ENCODE measurements at regions of chr1 and their contacts with region 1.

Region 1: DNA sequence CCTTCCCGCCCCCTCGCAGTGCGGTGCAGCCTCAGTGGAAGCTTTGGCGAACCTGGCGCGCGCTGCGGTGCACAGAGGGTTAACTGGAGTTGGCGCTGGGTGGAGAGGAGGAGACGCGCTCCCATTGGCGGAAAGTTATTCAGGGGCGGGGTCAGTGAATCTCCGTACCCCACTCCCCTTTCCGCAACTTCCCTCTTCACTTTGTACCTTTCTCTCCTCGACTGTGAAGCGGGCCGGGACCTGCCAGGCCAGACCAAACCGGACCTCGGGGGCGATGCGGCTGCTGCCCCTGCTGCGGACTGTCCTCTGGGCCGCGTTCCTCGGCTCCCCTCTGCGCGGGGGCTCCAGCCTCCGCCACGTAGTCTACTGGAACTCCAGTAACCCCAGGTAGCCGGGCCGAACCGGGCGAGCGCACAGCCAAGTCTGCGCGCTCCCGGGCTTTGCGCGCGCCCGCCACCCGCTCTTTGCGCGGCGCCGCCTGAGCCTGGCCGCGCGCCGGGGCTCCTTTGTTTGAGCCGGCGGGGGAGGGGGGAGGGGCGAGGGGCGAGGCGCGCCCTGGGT is at the start of gene EFNA4:
- DNase-seq: peak; percentile 92
- ATAC-seq: peak; percentile 87
- H3K4me3 Mint-ChIP-seq: peak within 1 kb of the TSS; percentile 83
- H3K27ac Mint-ChIP-seq: peak within 1 kb of the TSS; percentile 72
- H3K4me1 Mint-ChIP-seq: peaks cover 31% of the 10 kb centered on the region
- H3K27me3 Mint-ChIP-seq: no peaks in the 10 kb centered on the region
- total RNA-seq, gene EFNA4: 6.3 to 6.5 TPM

Region 2: DNA sequence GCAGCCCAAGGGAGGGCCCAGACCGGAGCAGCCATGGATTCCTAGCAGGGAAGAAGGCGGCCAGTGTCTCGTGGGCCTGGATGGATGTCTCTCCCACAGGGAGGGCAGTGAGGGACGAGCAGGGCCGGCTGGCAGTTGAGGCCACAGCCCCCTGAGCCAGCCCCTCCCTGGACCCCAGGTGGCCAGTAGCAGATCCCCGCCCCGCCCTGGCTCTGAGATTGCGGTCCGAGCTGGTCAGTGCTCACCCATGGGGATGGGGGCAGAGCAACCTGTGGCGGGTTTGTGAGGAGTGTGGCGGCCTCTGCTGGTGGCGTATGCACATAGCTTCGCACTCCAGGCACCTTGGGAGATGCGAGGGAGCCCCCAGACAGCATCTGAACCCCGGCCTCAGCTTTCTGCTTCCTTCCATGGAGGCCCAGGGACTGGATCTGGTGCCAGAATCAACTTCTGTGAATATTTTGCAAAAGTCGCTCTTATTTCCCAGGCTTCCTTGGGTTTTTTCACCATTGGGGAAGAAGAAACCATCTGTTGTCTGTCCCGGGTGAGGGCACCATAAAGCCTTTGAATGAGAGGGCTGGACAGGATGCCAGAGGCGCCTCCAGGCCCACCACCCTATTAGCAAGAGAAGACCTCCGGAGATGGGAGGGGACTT is 185.1 kb before region 1 on chr1:
- CTCF ChIA-PET with region 1: interaction called, 3 read pairs
- POLR2A ChIA-PET with region 1: no interaction called
- intact Hi-C with region 1: loop called in 1 of 2 experiments (anchors 1 kb)
- DNase-seq: peak; percentile 87
- ATAC-seq: peak; percentile 95
- H3K4me3 Mint-ChIP-seq: no peak overlapping the region
- H3K27ac Mint-ChIP-seq: no peak overlapping the region
- H3K4me1 Mint-ChIP-seq: peaks cover 10% of the 10 kb centered on the region
- H3K27me3 Mint-ChIP-seq: peaks cover 4% of the 10 kb centered on the region

Region 3: GRCh38 chr1:154961497-154962262 is 102.0 kb before region 1 on chr1 and contains the start of gene PYGO2:
- CTCF ChIA-PET with region 1: interaction called, 3 read pairs
- POLR2A ChIA-PET with region 1: no interaction called
- intact Hi-C with region 1: loop called (anchors 1 to 5 kb)
- DNase-seq: peak; percentile 90
- ATAC-seq: peak; percentile 81
- H3K4me3 Mint-ChIP-seq: peak within 1 kb of the TSS; percentile 91
- H3K27ac Mint-ChIP-seq: peak within 1 kb of the TSS; percentile 93
- H3K4me1 Mint-ChIP-seq: peaks cover 43% of the 10 kb centered on the region
- H3K27me3 Mint-ChIP-seq: no peaks in the 10 kb centered on the region
- total RNA-seq, gene PYGO2: 24.5 to 25.6 TPM

Region 4: DNA sequence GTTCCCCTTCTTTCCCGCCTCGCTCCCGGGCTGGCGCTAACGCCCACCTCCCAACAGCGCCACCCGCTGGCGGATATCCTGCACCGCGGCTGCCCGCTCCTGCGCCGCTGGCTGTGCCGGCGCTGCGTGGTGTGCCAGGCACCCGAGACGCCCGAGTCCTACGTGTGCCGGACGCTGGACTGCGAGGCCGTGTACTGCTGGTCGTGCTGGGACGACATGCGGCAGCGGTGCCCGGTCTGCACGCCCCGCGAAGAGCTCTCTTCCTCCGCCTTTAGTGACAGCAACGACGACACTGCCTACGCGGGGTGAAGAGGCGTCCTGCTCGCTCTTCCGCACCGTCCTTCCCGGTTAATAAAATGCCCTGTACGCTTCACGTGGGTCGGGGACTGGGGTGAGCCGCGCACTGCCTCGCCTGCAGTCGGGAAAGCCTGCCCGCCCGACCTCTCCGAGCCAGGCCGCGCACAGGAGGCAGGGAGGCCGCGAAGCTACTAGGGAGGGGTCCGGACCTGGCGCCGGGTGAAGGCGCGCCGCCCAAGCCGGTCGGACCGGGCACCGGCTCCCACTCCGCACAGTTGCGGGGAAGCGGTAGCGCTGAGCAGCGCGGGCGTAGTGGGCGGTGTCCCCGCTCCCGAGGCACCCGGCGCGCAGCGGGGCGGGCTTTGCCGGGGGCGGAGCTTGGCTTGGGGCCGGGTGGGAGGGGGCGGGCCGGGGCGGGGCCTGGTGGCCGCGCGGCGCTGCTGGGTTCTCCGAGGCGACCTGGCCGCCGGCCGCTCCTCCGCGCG is 12.9 kb before region 1 on chr1 and contains the start of gene ADAM15:
- CTCF ChIA-PET with region 1: interaction called, 67 read pairs
- POLR2A ChIA-PET with region 1: interaction called, 3 read pairs
- intact Hi-C with region 1: loop called (anchors 1 kb)
- DNase-seq: peak; percentile 90
- ATAC-seq: peak; percentile 78
- H3K4me3 Mint-ChIP-seq: peak within 1 kb of the TSS; percentile 74
- H3K27ac Mint-ChIP-seq: peak within 1 kb of the TSS; percentile 80
- H3K4me1 Mint-ChIP-seq: peaks cover 20% of the 10 kb centered on the region
- H3K27me3 Mint-ChIP-seq: no peaks in the 10 kb centered on the region
- total RNA-seq, gene ADAM15: 42.4 to 48.8 TPM

Region 5: DNA sequence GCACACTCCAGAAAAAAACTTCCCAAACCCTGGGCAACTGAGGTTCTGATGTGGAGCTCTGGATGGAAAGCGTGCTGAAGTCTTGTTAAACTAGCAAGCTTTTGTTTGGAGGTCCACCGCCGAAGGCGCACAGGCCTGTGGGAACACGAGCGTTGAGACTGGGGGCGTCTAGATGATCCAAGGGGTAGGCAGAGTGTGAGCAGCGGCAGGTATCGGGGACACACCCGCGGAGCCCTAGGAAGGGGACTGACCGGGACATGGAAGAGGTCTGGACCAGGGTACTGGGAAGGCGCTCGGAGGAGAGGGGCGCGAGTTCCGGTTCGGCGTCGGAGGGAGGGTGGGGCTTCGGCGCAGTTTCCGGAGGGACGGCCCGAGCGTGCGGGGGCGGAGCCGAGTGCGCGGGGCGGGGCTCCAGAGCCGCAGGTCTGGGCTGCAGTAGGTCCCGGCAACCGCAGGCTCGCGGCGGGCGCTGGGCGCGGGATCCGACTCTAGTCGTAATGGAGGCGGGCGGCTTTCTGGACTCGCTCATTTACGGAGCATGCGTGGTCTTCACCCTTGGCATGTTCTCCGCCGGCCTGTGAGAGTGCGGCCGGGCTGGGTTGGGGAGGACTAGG is 71.9 kb after region 1 on chr1 and contains the start of gene SLC50A1:
- CTCF ChIA-PET with region 1: no interaction called
- POLR2A ChIA-PET with region 1: no interaction called
- intact Hi-C with region 1: loop called in 1 of 2 experiments (anchors 1 kb)
- DNase-seq: peak; percentile 97
- ATAC-seq: peak; percentile 78
- H3K4me3 Mint-ChIP-seq: peak within 1 kb of the TSS; percentile 96
- H3K27ac Mint-ChIP-seq: peak within 1 kb of the TSS; percentile 97
- H3K4me1 Mint-ChIP-seq: peaks cover 35% of the 10 kb centered on the region
- H3K27me3 Mint-ChIP-seq: no peaks in the 10 kb centered on the region
- total RNA-seq, gene SLC50A1: 50.2 to 58.0 TPM

Measured in activated CD4-positive, alpha-beta T cell treated with anti-CD3 and anti-CD28 coated beads for 36 hours (primary cell).